Activated CD4-positive, alpha-beta T cell treated with anti-CD3 and anti-CD28 coated beads, Interleukin-2, amount 10 ng/mL, durations not matched to agents 24 days and 14 days (primary cell): ENCODE measurements at regions of chr9 and their contacts with region 1.

Region 1: DNA sequence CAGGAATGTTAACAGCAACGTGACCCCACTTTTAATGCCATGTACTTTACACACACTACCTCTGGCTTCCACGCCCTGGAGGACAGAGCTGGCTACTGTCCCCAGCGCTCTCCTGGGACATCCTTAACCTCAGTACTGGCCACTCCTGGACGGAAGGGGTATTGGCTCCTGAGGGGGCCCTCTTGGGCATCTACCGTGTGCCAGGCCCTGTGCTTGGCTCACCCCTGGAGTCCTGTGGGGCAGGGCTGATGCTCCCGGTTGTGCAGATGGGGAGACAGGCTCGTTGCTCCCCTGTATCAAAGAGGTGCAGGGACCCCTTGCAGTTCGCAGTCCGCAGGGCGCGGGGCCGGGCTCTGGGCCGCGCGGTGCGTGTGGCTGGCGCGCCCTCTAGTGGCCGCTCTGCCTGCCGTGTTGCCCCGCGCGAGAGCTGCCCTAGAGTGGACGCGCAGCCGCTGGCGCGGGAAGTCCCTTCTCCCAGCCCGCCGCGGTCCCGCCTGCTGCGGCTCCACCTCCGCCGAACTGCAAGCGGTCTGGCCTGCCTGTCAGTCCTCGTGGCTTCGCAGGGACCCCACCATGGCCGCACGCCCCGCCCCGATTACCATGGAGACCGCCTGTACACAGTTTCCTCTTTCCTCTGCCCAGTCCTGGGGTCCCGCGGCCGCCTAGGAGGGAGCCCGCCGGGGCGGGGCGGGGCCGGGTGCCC is at the start of gene WDR38:
- DNase-seq: peak; percentile 95
- H3K4me3 Mint-ChIP-seq: peak within 1 kb of the TSS; percentile 72
- H3K27ac Mint-ChIP-seq: no peak within 1 kb of the TSS
- H3K4me1 Mint-ChIP-seq: peaks cover 5% of the 10 kb centered on the region
- H3K27me3 Mint-ChIP-seq: peaks cover 12% of the 10 kb centered on the region
- total RNA-seq, gene WDR38: not detected in 2 replicates

Region 2: GRCh38 chr9:124708633-124709291 is 144.2 kb before region 1 on chr9:
- intact Hi-C with region 1: loop called (anchors 5 kb)
- DNase-seq: peak; percentile 18
- H3K4me3 Mint-ChIP-seq: no peak overlapping the region
- H3K27ac Mint-ChIP-seq: no peak overlapping the region
- H3K4me1 Mint-ChIP-seq: peaks cover 2% of the 10 kb centered on the region
- H3K27me3 Mint-ChIP-seq: peaks cover 25% of the 10 kb centered on the region

Region 3: GRCh38 chr9:124771021-124771866 is 81.7 kb before region 1 on chr9 and contains the start of gene NR6A1:
- intact Hi-C with region 1: loop called (anchors 1 kb)
- DNase-seq: peak; percentile 99
- H3K4me3 Mint-ChIP-seq: peak within 1 kb of the TSS; percentile 91
- H3K27ac Mint-ChIP-seq: peak within 1 kb of the TSS; percentile 94
- H3K4me1 Mint-ChIP-seq: peaks cover 44% of the 10 kb centered on the region
- H3K27me3 Mint-ChIP-seq: peaks cover 63% of the 10 kb centered on the region
- total RNA-seq, gene NR6A1: 2.3 and 2.7 TPM in 2 replicates

Region 4: DNA sequence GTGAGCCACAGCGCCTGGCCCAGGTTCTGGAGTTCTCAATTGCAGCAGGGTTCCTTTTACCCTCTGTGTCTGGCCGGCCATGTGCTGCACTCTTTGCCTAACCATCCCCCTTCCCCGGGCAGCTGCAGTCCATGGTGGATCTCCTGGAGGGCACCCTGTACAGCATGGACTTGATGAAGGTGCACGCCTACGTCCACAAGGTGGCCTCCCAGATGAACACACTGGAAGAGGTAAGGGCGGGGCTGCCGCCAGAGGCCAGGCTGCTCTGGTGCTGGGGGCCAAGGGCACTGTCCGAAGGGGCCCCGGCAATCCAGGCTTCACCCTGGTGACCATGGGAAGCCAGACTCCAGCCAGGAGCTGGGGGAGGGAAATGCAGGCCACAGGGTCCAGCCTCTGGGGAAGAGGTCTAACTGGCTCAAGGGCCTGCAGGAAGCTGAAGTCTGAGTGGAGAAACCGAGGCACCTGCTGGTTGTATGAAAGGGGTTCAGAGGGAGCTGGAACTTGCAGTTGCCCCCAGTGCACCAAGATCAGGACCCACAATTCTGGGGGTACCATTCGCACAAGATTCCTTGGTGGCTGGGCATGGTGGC is 58.0 kb before region 1 on chr9:
- intact Hi-C with region 1: no loop called
- DNase-seq: no peak
- H3K4me3 Mint-ChIP-seq: no peak overlapping the region
- H3K27ac Mint-ChIP-seq: no peak overlapping the region
- H3K4me1 Mint-ChIP-seq: no peaks in the 10 kb centered on the region
- H3K27me3 Mint-ChIP-seq: peaks cover 11% of the 10 kb centered on the region

Region 5: DNA sequence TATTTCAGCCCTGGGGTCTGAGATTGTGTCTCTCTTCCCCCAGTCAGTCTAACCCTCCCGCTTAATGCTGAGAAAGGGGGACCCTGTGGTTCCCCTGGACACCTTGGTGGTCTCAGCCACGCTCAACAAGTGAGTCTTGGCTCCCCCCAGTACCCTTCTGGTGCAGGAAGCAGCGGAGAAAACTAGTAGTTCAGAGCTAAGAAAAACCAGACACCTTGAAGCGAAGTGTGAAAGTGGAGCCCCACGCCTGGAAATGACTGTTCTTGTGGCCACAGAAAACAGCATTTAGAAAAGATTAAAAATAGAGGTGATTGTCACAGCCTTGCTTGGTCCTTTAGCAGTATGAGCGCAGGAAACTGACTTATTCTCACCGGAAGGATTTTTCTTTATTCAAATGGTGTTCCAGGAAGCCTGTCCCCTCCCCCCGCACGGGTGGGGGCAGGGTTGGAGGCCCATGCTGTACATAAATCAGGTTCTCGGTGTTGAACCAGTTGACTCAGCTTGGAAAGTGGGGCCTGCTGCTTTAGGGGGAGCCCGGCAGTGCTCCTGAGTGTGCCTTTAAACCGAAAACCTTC is 17.1 kb after region 1 on chr9:
- intact Hi-C with region 1: loop called (anchors 1 kb)
- DNase-seq: peak; percentile 94
- H3K4me3 Mint-ChIP-seq: peak overlapping the region; percentile 99
- H3K27ac Mint-ChIP-seq: peak overlapping the region; percentile 99
- H3K4me1 Mint-ChIP-seq: peaks cover 42% of the 10 kb centered on the region
- H3K27me3 Mint-ChIP-seq: no peaks in the 10 kb centered on the region

Region 6: GRCh38 chr9:124894741-124895170 is 41.8 kb after region 1 on chr9:
- intact Hi-C with region 1: loop called (anchors 1 kb)
- DNase-seq: peak; percentile 82
- H3K4me3 Mint-ChIP-seq: no peak overlapping the region
- H3K27ac Mint-ChIP-seq: peak overlapping the region; percentile 5
- H3K4me1 Mint-ChIP-seq: peaks cover 9% of the 10 kb centered on the region
- H3K27me3 Mint-ChIP-seq: no peaks in the 10 kb centered on the region

Region 7: GRCh38 chr9:125374443-125375309 is 521.7 kb after region 1 on chr9:
- intact Hi-C with region 1: loop called (anchors 5 kb)
- DNase-seq: peak; percentile 90
- H3K4me3 Mint-ChIP-seq: peak overlapping the region; percentile 70
- H3K27ac Mint-ChIP-seq: no peak overlapping the region
- H3K4me1 Mint-ChIP-seq: peaks cover 4% of the 10 kb centered on the region
- H3K27me3 Mint-ChIP-seq: peaks cover 3% of the 10 kb centered on the region